HepG2 (cell line): ENCODE measurements at regions of chr16 and their contacts with region 1.

Region 1: GRCh38 chr16:30065143-30065850 is at the start of gene ALDOA:
- DNase-seq: peak; percentile 96
- ATAC-seq: peak; percentile 89
- H3K4me3 ChIP-seq: peak within 1 kb of the TSS; percentile 92 to 100 (median 95)
- H3K27ac ChIP-seq: peak within 1 kb of the TSS; percentile 95
- H3K4me1 ChIP-seq: peaks cover 46% of the 10 kb centered on the region
- H3K27me3 ChIP-seq: peaks cover 0 to 2% of the 10 kb centered on the region in 2 experiments; a peak in 1 of 5 replicates
- CTCF ChIP-seq: peak; percentile 19
- EP300 ChIP-seq: peak; percentile 3 to 87; a peak in 3 of 4 replicates
- POLR2A ChIP-seq: peak in 1 of 2 experiments; percentile 96; a peak in 2 of 4 replicates
- RAD21 ChIP-seq: peak; percentile 62; the same call in 1 of the 2 replicates
- total RNA-seq, gene ALDOA: 925 and 999 TPM in 2 replicates

Region 2: GRCh38 chr16:30052671-30053372 is 12.5 kb before region 1 on chr16:
- CTCF ChIA-PET with region 1: no interaction called
- POLR2A ChIA-PET with region 1: interaction called, 66 read pairs
- in situ Hi-C with region 1: no loop called
- intact Hi-C with region 1: no loop called
- DNase-seq: peak; percentile 88
- ATAC-seq: peak; percentile 76
- H3K4me3 ChIP-seq: peak overlapping the region; percentile 63 to 77 (median 75)
- H3K27ac ChIP-seq: no peak overlapping the region
- H3K4me1 ChIP-seq: peaks cover 26% of the 10 kb centered on the region
- H3K27me3 ChIP-seq: peaks cover 0 to 7% of the 10 kb centered on the region in 2 experiments; a peak in 2 of 5 replicates
- CTCF ChIP-seq: no peak; the same call in 1 of the 2 replicates
- EP300 ChIP-seq: peak; percentile 60 to 63; a peak in 1 of 4 replicates
- POLR2A ChIP-seq: no peak
- RAD21 ChIP-seq: peak; percentile 61; the same call in 1 of the 2 replicates

Region 3: GRCh38 chr16:30082545-30083090 is 17.3 kb after region 1 on chr16:
- CTCF ChIA-PET with region 1: no interaction called
- POLR2A ChIA-PET with region 1: interaction called, 28 read pairs
- in situ Hi-C with region 1: no loop called
- intact Hi-C with region 1: no loop called
- DNase-seq: no peak
- ATAC-seq: peak; percentile 15; the same call in 2 of the 3 replicates
- H3K4me3 ChIP-seq: no peak overlapping the region
- H3K27ac ChIP-seq: peak overlapping the region; percentile 35
- H3K4me1 ChIP-seq: peaks cover 49% of the 10 kb centered on the region
- H3K27me3 ChIP-seq: no peaks in the 10 kb centered on the region
- CTCF ChIP-seq: peak; percentile 44
- EP300 ChIP-seq: no peak
- POLR2A ChIP-seq: no peak
- RAD21 ChIP-seq: no peak

Region 4: GRCh38 chr16:30112197-30113030 is 47.1 kb after region 1 on chr16:
- CTCF ChIA-PET with region 1: interaction called, 3 read pairs
- POLR2A ChIA-PET with region 1: interaction called, 33 read pairs
- in situ Hi-C with region 1: no loop called
- intact Hi-C with region 1: no loop called
- DNase-seq: peak; percentile 83
- ATAC-seq: peak; percentile 87
- H3K4me3 ChIP-seq: peak overlapping the region; percentile 23 to 65 (median 27)
- H3K27ac ChIP-seq: peak overlapping the region; percentile 70
- H3K4me1 ChIP-seq: peaks cover 30% of the 10 kb centered on the region
- H3K27me3 ChIP-seq: no peaks in the 10 kb centered on the region
- CTCF ChIP-seq: peak; percentile 99
- EP300 ChIP-seq: peak in 1 of 2 experiments; percentile 21; a peak in 1 of 4 replicates
- POLR2A ChIP-seq: peak; percentile 21 to 47; a peak in 1 of 4 replicates
- RAD21 ChIP-seq: peak; percentile 99

Region 5: GRCh38 chr16:30378236-30379204 is 313.2 kb after region 1 on chr16:
- CTCF ChIA-PET with region 1: no interaction called
- POLR2A ChIA-PET with region 1: no interaction called
- in situ Hi-C with region 1: no loop called
- intact Hi-C with region 1: no loop called
- DNase-seq: peak; percentile 95
- ATAC-seq: peak; percentile 92
- H3K4me3 ChIP-seq: peak overlapping the region; percentile 71 to 97 (median 80)
- H3K27ac ChIP-seq: peak overlapping the region; percentile 90
- H3K4me1 ChIP-seq: peaks cover 52% of the 10 kb centered on the region
- H3K27me3 ChIP-seq: no peaks in the 10 kb centered on the region
- CTCF ChIP-seq: peak; percentile 53
- EP300 ChIP-seq: peak in 1 of 2 experiments; percentile 64; a peak in 2 of 4 replicates
- POLR2A ChIP-seq: peak; percentile 65 to 98; a peak in 3 of 4 replicates
- RAD21 ChIP-seq: peak; percentile 55